Panc1 (cell line): ENCODE measurements at regions of chr11 and their contacts with region 1.

Region 1: GRCh38 chr11:130323452-130324450 is 9.0 kb upstream of the ZBTB44 start:
- DNase-seq: no peak
- ATAC-seq: no peak
- H3K4me3 ChIP-seq: no peak overlapping the region
- H3K27ac ChIP-seq: no peak overlapping the region
- H3K4me1 ChIP-seq: no peaks in the 10 kb centered on the region
- H3K27me3 ChIP-seq: no peaks in the 10 kb centered on the region
- CTCF ChIP-seq: no peak

Region 2: DNA sequence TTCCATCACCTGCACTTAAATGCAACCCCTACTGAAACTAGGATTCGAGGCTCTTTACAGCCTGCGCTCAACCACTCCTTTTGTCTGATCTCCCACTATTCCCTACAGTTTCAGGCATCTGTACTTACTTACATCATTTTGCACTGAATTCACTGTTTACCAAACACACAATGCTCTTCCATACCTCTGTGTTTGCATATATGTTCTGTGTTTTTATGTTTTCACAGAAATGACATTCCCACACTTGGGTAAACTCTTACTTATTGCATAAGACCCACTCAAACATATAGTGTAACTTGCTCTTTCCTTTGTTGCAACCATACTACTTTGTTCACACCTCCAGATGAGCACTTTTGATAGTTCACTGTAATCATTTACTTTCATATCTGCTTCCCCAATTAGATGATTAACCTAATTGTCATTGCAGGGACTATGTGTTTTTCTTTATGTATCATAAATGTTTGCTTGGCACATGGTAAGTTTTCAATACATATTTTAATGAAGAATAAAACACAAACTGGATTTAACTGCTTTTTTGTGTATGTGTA is 63.6 kb before region 1 on chr11:
- CTCF ChIA-PET with region 1: no interaction called
- POLR2A ChIA-PET with region 1: interaction called, 18 read pairs
- in situ Hi-C with region 1: no loop called
- intact Hi-C with region 1: no loop called
- DNase-seq: no peak
- ATAC-seq: no peak
- H3K4me3 ChIP-seq: no peak overlapping the region
- H3K27ac ChIP-seq: no peak overlapping the region
- H3K4me1 ChIP-seq: no peaks in the 10 kb centered on the region
- H3K27me3 ChIP-seq: no peaks in the 10 kb centered on the region
- CTCF ChIP-seq: no peak